ENCODE measurements at regions of chr7 and their contacts with region 1.

Region 1: GRCh38 chr7:87416682-87417587 is 58.5 kb downstream of the ABCB4 start:
- DNase-seq: peak; percentile 65
- H3K4me3 ChIP-seq: no peak overlapping the region
- H3K27ac ChIP-seq: no peak overlapping the region
- H3K4me1 ChIP-seq: no peaks in the 10 kb centered on the region
- H3K27me3 ChIP-seq: no peaks in the 10 kb centered on the region
- CTCF ChIP-seq: peak; percentile 42 to 88 (median 86)
- POLR2A ChIP-seq: no peak

Region 2: GRCh38 chr7:87312215-87312865 is 104.6 kb before region 1 on chr7:
- intact Hi-C with region 1: loop called (anchors 2 kb)
- DNase-seq: peak; percentile 53
- H3K4me3 ChIP-seq: no peak overlapping the region
- H3K27ac ChIP-seq: no peak overlapping the region
- H3K4me1 ChIP-seq: no peaks in the 10 kb centered on the region
- H3K27me3 ChIP-seq: no peaks in the 10 kb centered on the region
- CTCF ChIP-seq: peak; percentile 96 to 98 (median 96)
- POLR2A ChIP-seq: no peak

Region 3: DNA sequence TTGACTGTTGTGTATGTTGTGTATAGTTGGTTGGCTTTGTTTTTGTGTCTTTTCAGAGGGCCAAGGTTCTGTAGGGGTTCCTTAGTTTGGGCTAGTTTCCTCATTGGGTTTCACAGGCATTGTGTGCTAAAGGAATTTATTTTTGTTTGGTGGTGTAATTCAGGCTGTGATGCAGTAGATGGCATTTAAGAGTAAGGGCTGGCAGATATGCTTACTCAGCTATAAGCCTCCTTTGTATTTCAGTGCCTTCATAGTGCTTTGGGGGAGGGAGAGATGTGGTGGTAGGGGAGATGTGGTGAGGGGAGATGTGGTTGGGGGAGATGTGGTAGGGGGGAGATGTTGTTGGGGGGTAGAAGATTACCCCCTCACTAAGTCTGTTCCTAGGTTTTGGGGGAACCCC is 367.5 kb after region 1 on chr7:
- intact Hi-C with region 1: no loop called
- DNase-seq: no peak
- H3K4me3 ChIP-seq: no peak overlapping the region
- H3K27ac ChIP-seq: no peak overlapping the region
- H3K4me1 ChIP-seq: no peaks in the 10 kb centered on the region
- H3K27me3 ChIP-seq: no peaks in the 10 kb centered on the region
- CTCF ChIP-seq: no peak
- POLR2A ChIP-seq: no peak

Region 4: GRCh38 chr7:87886875-87887274 is 469.9 kb after region 1 on chr7:
- intact Hi-C with region 1: loop called (anchors 5 kb)
- DNase-seq: no peak
- H3K4me3 ChIP-seq: no peak overlapping the region
- H3K27ac ChIP-seq: no peak overlapping the region
- H3K4me1 ChIP-seq: no peaks in the 10 kb centered on the region
- H3K27me3 ChIP-seq: no peaks in the 10 kb centered on the region
- CTCF ChIP-seq: peak in 3 of 4 experiments; percentile 48 to 51 (median 50)
- POLR2A ChIP-seq: no peak